PC-3 (cell line): ENCODE measurements at regions of chr10 and their contacts with region 1.

Region 1: GRCh38 chr10:73886085-73886529 is 11.8 kb upstream of the CAMK2G start:
- DNase-seq: peak; percentile 100
- ATAC-seq: peak; percentile 49
- H3K4me3 ChIP-seq: no peak overlapping the region
- H3K27ac ChIP-seq: peak overlapping the region; percentile 82
- H3K4me1 ChIP-seq: peaks cover 57% of the 10 kb centered on the region
- H3K27me3 ChIP-seq: no peaks in the 10 kb centered on the region
- CTCF ChIP-seq: no peak

Region 2: DNA sequence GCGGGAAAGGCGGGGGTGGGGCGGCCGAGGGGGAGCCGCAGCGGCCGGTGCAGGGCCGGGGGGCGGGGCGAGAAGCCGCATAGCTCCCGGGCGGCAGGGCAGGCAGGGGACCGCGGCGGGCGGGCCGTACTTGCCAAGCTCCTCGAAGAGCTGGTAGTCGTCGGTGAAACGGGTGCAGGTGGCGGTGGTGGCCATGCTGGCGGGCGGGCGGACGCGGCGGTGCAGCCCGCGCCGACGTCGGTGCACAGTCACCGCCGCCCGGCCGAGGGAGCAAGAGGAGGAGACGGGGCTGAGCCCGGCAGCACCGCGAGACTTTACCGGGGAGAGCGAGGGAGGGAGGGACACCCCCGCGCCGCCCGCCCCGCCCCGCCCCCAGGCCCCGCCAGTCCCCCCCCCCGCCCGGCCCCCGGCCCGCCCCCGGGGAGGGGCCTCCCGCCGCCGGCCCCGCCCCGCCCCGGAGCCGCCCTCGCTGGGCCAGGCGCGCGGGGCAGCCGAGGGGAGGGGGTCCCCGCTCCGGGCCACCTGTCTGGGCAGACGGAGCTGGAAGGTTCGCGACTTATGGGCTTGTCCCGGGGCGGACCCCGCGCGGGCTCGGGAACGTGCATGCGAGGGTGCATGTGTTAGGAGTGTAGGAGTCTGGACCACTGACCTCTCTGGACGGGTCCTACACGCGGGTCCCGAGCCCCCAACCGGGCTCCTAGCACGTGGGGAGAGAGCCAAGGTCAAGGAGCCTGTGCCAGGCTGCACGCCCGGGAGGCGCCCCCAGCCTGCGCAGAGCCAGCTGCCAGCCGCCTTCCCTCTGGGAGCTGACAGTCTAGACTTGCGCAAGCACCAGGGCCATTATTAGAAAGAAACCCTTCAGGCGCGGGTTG is 11.6 kb before region 1 on chr10 and contains the start of gene CAMK2G:
- CTCF ChIA-PET with region 1: interaction called, 13 read pairs
- POLR2A ChIA-PET with region 1: no interaction called
- intact Hi-C with region 1: no loop called
- DNase-seq: peak; percentile 100
- ATAC-seq: peak; percentile 87
- H3K4me3 ChIP-seq: peak within 1 kb of the TSS; percentile 68
- H3K27ac ChIP-seq: no peak within 1 kb of the TSS
- H3K4me1 ChIP-seq: peaks cover 48% of the 10 kb centered on the region
- H3K27me3 ChIP-seq: no peaks in the 10 kb centered on the region
- CTCF ChIP-seq: no peak
- total RNA-seq, gene CAMK2G: 170 and 179 TPM in 2 replicates

Region 3: GRCh38 chr10:73916761-73917470 is 30.8 kb after region 1 on chr10:
- CTCF ChIA-PET with region 1: interaction called, 21 read pairs
- POLR2A ChIA-PET with region 1: interaction called, 182 read pairs
- intact Hi-C with region 1: no loop called
- DNase-seq: peak; percentile 50
- ATAC-seq: peak; percentile 5
- H3K4me3 ChIP-seq: peak overlapping the region; percentile 0; the same call in 1 of the 2 replicates
- H3K27ac ChIP-seq: peak overlapping the region; percentile 7
- H3K4me1 ChIP-seq: peaks cover 58% of the 10 kb centered on the region
- H3K27me3 ChIP-seq: no peaks in the 10 kb centered on the region
- CTCF ChIP-seq: no peak

Region 4: GRCh38 chr10:73946253-73947155 is 60.4 kb after region 1 on chr10:
- CTCF ChIA-PET with region 1: interaction called, 317 read pairs
- POLR2A ChIA-PET with region 1: interaction called, 29 read pairs
- intact Hi-C with region 1: loop called (anchors 1 kb)
- DNase-seq: peak; percentile 69
- ATAC-seq: peak; percentile 17
- H3K4me3 ChIP-seq: no peak overlapping the region
- H3K27ac ChIP-seq: no peak overlapping the region
- H3K4me1 ChIP-seq: peaks cover 8% of the 10 kb centered on the region
- H3K27me3 ChIP-seq: no peaks in the 10 kb centered on the region
- CTCF ChIP-seq: peak; percentile 83

Region 5: DNA sequence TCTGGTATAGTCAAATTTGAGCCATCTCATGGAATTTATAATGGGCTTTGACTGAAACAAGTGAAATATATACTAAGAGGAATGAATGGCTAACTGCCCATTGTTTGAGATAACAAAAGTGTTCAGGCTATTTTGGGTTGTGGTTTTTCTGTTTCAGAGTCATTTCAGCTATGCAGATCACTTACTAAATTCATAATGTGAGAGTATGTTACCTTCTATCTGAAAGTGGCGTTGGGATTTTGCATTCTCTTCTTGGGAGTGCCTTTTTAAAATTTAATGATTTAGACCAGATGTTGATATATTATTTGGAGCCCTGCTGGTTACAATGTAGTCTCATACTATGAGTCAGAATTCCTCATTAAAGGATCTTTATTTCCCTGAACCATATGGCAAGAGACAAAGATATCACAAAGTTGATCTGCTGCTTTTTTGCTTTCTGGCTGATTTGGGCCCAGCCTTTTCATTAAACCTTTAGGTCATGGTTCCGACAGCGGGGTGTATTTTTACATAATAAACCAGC is 122.2 kb after region 1 on chr10:
- CTCF ChIA-PET with region 1: interaction called, 9 read pairs
- POLR2A ChIA-PET with region 1: no interaction called
- intact Hi-C with region 1: loop called (anchors 2 kb)
- DNase-seq: peak; percentile 98
- ATAC-seq: peak; percentile 80
- H3K4me3 ChIP-seq: peak overlapping the region; percentile 1; the same call in 1 of the 2 replicates
- H3K27ac ChIP-seq: peak overlapping the region; percentile 54
- H3K4me1 ChIP-seq: peaks cover 68% of the 10 kb centered on the region
- H3K27me3 ChIP-seq: no peaks in the 10 kb centered on the region
- CTCF ChIP-seq: 0 out of 2 replicates have a peak, but pooled peaks have one; percentile 17

Region 6: GRCh38 chr10:74081192-74081803 is 195.2 kb after region 1 on chr10:
- CTCF ChIA-PET with region 1: interaction called, 27 read pairs
- POLR2A ChIA-PET with region 1: interaction called, 4 read pairs
- intact Hi-C with region 1: loop called (anchors 1 kb)
- DNase-seq: peak; percentile 94
- ATAC-seq: peak; percentile 49
- H3K4me3 ChIP-seq: no peak overlapping the region
- H3K27ac ChIP-seq: no peak overlapping the region
- H3K4me1 ChIP-seq: peaks cover 43% of the 10 kb centered on the region
- H3K27me3 ChIP-seq: no peaks in the 10 kb centered on the region
- CTCF ChIP-seq: no peak

Region 7: DNA sequence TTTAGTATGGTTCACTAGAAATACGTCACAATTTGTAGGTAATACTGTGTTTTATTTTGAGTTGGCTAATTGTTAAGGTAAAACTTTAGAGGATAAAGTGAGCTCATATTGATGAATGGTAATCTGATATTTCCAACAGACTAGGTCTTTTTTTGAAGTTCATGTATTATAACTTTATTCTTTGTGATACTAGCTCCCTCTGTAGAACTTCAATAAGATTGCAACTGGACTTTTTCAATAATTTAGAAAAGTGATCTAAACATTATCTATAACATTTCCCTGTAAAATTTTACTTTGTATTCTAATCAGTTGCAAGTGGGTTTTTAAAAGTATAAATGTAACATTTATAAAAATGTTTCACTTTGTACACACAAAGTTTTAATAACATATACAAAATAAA is 348.5 kb after region 1 on chr10:
- CTCF ChIA-PET with region 1: no interaction called
- POLR2A ChIA-PET with region 1: no interaction called
- intact Hi-C with region 1: loop called (anchors 5 kb)
- DNase-seq: peak; percentile 81
- ATAC-seq: peak; percentile 25; the same call in 1 of the 2 replicates
- H3K4me3 ChIP-seq: no peak overlapping the region
- H3K27ac ChIP-seq: no peak overlapping the region
- H3K4me1 ChIP-seq: peaks cover 14% of the 10 kb centered on the region
- H3K27me3 ChIP-seq: no peaks in the 10 kb centered on the region
- CTCF ChIP-seq: peak; percentile 99